GM12878 (cell line): ENCODE measurements at regions of chr11 and their contacts with region 1.

Region 1: DNA sequence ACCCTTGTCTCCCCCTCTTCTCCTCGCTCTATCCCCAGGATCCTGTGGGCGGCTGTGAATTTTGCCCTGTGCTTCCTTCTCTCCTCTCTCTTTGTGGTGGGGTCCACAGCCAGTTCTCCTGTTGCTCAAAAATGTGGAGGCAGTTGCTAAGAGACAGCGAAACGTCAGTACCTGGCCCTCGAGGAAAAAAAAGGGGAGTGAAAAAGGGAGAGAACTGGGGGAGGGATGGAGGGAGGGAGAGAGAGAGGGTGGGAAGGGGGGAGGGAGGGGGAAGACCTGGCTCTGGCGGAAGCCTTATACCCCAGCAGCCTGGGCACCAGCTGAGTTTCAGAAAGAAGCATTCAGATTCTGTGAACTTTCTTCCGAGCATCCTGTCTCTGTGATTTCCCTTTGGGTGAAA is 2.1 kb upstream of the LRRC55 start:
- DNase-seq: no peak
- ATAC-seq: no peak
- H3K4me3 ChIP-seq: no peak overlapping the region
- H3K27ac ChIP-seq: no peak overlapping the region
- H3K4me1 ChIP-seq: no peaks in the 10 kb centered on the region
- H3K27me3 ChIP-seq: no peaks in the 10 kb centered on the region; a peak in 3 of 4 replicates
- CTCF ChIP-seq: no peak
- EP300 ChIP-seq: no peak
- POLR2A ChIP-seq: no peak
- RAD21 ChIP-seq: no peak

Region 2: GRCh38 chr11:57124917-57125316 is 54.8 kb before region 1 on chr11:
- CTCF ChIA-PET with region 1: no interaction called
- POLR2A ChIA-PET with region 1: no interaction called
- RAD21 ChIA-PET with region 1: no interaction called
- SMC1A ChIA-PET with region 1: no interaction called
- in situ Hi-C with region 1: no loop called
- intact Hi-C with region 1: loop called (anchors 10 kb)
- DNase-seq: no peak
- ATAC-seq: no peak
- H3K4me3 ChIP-seq: no peak overlapping the region
- H3K27ac ChIP-seq: no peak overlapping the region
- H3K4me1 ChIP-seq: no peaks in the 10 kb centered on the region
- H3K27me3 ChIP-seq: peaks cover 1 to 2% of the 10 kb centered on the region in 2 experiments; a peak in 3 of 4 replicates
- CTCF ChIP-seq: no peak
- EP300 ChIP-seq: no peak
- POLR2A ChIP-seq: no peak
- RAD21 ChIP-seq: no peak

Region 3: GRCh38 chr11:57476047-57476756 is 296.5 kb after region 1 on chr11:
- CTCF ChIA-PET with region 1: no interaction called
- POLR2A ChIA-PET with region 1: no interaction called
- RAD21 ChIA-PET with region 1: no interaction called
- SMC1A ChIA-PET with region 1: no interaction called
- in situ Hi-C with region 1: no loop called
- intact Hi-C with region 1: no loop called
- DNase-seq: no peak
- ATAC-seq: peak; percentile 55
- H3K4me3 ChIP-seq: peak overlapping the region; percentile 57
- H3K27ac ChIP-seq: peak overlapping the region; percentile 55
- H3K4me1 ChIP-seq: peaks cover 24% of the 10 kb centered on the region
- H3K27me3 ChIP-seq: no peaks in the 10 kb centered on the region
- CTCF ChIP-seq: peak in 1 of 3 experiments; percentile 7; a peak in 1 of 6 replicates
- EP300 ChIP-seq: no peak
- POLR2A ChIP-seq: no peak
- RAD21 ChIP-seq: no peak